Endothelial cell of umbilical vein (primary cell): ENCODE measurements at regions of chr6 and their contacts with region 1.

Region 1: DNA sequence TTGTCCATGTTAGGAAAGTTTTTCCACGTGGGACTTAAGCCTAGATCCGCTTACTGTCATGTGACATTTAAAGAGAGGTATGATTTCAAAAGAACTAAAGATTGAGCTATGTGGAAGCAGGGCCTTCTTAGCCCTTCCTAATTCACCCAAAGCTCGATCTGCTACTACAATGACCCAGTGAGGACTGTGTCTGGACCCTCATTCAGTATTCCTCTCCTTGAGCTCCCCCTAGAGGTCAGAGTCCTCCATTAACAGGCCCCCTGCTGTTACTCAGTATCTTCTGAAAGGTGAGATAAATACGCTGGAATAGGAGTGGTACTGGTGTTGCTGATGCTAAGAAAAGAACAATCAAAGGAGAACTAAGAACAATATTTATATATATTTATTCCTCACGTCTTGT is 414.0 kb downstream of the GJA1 start:
- DNase-seq: peak; percentile 88
- H3K4me3 ChIP-seq: no peak overlapping the region
- H3K27ac ChIP-seq: no peak overlapping the region
- H3K4me1 ChIP-seq: no peaks in the 10 kb centered on the region
- H3K27me3 ChIP-seq: no peaks in the 10 kb centered on the region
- CTCF ChIP-seq: peak; percentile 75 to 87
- POLR2A ChIP-seq: no peak

Region 2: DNA sequence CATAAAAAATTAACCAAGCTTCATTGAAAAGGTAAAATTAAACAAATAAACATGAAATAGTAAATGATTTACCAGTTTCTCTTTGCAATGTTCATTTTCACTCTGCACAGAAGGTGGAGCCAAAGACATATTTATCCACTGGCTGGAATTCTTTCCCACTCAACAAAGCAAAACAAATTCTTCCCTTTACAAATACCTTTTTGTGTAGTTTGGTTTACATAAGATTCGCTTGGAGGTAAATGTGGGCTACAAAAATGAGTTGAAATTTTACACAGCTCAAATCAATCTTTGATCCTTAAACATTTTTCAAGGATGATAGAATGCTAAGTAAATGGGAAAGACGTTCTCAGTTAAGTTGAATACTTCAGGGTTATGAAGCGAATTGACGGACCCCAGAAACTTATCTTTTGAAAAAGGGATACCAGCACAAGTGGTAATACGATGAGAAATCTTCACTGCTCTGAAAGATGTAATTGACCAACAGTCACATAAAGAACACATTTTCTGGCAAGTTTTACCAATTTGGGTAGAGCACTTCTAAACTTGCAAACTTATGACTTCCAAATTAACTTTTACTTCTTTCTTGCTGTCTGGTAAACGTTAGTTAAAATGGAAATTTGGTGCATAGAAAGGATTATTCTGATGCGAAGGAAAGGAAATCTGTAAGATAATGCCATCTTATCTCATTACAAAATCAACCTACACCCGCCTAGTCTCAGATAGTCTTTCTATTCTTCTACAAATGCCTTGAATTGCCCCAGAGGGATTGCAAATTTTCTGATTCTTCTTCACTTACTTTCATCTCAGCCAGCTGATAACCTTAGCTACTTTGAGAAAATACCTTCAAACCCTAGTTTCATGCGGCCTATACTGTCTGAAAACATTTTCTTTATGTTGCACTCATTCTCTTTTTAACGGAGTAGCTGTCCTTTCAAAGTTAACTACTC is 418.7 kb before region 1 on chr6:
- CTCF ChIA-PET with region 1: interaction called, 108 read pairs
- POLR2A ChIA-PET with region 1: interaction called, 4 read pairs
- dilution Hi-C with region 1: no loop called
- intact Hi-C with region 1: loop called (anchors 1 kb)
- DNase-seq: peak; percentile 77
- H3K4me3 ChIP-seq: no peak overlapping the region
- H3K27ac ChIP-seq: no peak overlapping the region
- H3K4me1 ChIP-seq: peaks cover 13% of the 10 kb centered on the region
- H3K27me3 ChIP-seq: no peaks in the 10 kb centered on the region
- CTCF ChIP-seq: peak; percentile 47 to 49
- POLR2A ChIP-seq: no peak

Region 3: GRCh38 chr6:121443971-121444541 is 405.4 kb before region 1 on chr6:
- CTCF ChIA-PET with region 1: interaction called, 85 read pairs
- POLR2A ChIA-PET with region 1: interaction called, 3 read pairs
- dilution Hi-C with region 1: no loop called
- intact Hi-C with region 1: no loop called
- DNase-seq: peak; percentile 70
- H3K4me3 ChIP-seq: no peak overlapping the region
- H3K27ac ChIP-seq: peak overlapping the region; percentile 28
- H3K4me1 ChIP-seq: peaks cover 43% of the 10 kb centered on the region
- H3K27me3 ChIP-seq: no peaks in the 10 kb centered on the region
- CTCF ChIP-seq: no peak
- POLR2A ChIP-seq: no peak

Region 4: DNA sequence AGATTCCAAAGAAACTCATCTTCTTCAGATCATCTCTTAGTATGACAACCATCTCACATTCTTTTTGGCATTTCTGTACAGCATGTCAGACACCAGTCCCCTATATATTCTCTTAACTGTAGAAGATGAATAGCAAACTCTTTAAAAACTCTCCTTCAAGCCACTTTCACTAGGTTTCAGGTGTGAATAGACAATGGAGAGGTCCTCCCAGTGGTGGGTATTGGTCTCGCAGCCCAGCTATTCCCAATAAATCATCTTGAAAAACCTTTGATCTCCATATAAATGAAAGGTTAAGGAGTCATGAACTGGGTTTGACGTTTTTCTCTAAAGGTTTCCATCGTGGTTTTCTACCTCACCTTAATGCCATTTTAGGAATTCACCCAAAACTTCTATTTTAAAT is 234.0 kb before region 1 on chr6:
- CTCF ChIA-PET with region 1: interaction called, 5 read pairs
- POLR2A ChIA-PET with region 1: no interaction called
- dilution Hi-C with region 1: no loop called
- intact Hi-C with region 1: loop called (anchors 2 kb)
- DNase-seq: peak; percentile 21
- H3K4me3 ChIP-seq: no peak overlapping the region
- H3K27ac ChIP-seq: no peak overlapping the region
- H3K4me1 ChIP-seq: no peaks in the 10 kb centered on the region
- H3K27me3 ChIP-seq: no peaks in the 10 kb centered on the region
- CTCF ChIP-seq: peak; percentile 4 to 15
- POLR2A ChIP-seq: no peak

Region 5: DNA sequence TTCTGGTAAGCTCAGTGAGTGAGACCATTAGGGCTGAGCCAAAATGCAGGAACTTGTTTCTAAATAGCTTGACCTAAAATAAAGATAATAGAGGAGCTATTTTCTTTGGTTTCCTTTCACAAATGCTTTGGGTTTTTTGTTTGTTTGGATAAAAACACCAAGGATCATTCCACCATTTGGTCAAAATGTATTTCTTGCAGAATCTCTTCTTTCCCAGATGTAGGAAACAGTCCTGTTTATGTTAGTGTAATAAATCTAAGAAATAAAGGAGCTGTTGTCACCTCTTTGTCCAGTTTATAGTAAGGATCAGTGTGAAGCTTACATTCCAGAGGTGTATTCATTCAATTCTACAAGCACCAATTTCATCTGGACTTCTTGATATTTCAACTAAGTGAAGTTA is 116.2 kb before region 1 on chr6:
- CTCF ChIA-PET with region 1: interaction called, 11 read pairs
- POLR2A ChIA-PET with region 1: no interaction called
- dilution Hi-C with region 1: no loop called
- intact Hi-C with region 1: no loop called
- DNase-seq: peak; percentile 31
- H3K4me3 ChIP-seq: no peak overlapping the region
- H3K27ac ChIP-seq: no peak overlapping the region
- H3K4me1 ChIP-seq: no peaks in the 10 kb centered on the region
- H3K27me3 ChIP-seq: no peaks in the 10 kb centered on the region
- CTCF ChIP-seq: no peak
- POLR2A ChIP-seq: no peak

Region 6: DNA sequence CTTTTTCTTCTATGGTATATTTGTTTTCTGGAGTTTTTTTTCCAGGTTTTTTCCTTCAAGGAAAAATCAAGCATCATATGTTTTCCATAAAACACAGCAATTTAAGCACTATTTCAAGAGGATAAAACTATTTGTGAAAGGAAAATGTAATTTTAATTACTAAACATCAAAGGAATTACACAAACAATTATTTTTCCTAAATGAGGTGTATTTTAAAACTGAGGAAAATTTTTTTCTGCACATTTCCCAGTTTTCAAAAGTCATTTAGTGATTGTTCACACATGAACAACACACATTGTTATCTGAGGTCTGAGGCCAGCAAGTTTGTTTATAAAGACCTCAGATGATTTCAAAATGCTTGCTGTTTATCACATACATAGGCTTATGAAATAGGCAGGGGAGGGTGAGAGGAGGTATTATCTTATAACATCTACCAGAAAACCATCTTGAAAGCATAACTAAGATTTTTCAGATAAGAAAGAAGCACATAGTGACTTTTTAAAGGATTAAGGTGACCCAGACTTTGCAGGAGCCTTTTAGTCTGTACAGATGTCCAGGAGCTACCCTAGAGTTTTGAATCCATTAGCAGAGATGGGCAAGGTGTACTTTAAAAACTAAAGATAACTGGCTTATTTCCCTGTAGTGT is 32.4 kb before region 1 on chr6:
- CTCF ChIA-PET with region 1: no interaction called
- POLR2A ChIA-PET with region 1: no interaction called
- dilution Hi-C with region 1: no loop called
- intact Hi-C with region 1: no loop called
- DNase-seq: no peak
- H3K4me3 ChIP-seq: no peak overlapping the region
- H3K27ac ChIP-seq: no peak overlapping the region
- H3K4me1 ChIP-seq: no peaks in the 10 kb centered on the region
- H3K27me3 ChIP-seq: no peaks in the 10 kb centered on the region
- CTCF ChIP-seq: no peak
- POLR2A ChIP-seq: no peak

Region 7: GRCh38 chr6:122033539-122034181 is 184.2 kb after region 1 on chr6:
- CTCF ChIA-PET with region 1: interaction called, 17 read pairs
- POLR2A ChIA-PET with region 1: no interaction called
- dilution Hi-C with region 1: no loop called
- intact Hi-C with region 1: loop called (anchors 1 kb)
- DNase-seq: peak; percentile 69
- H3K4me3 ChIP-seq: no peak overlapping the region
- H3K27ac ChIP-seq: no peak overlapping the region
- H3K4me1 ChIP-seq: no peaks in the 10 kb centered on the region
- H3K27me3 ChIP-seq: no peaks in the 10 kb centered on the region
- CTCF ChIP-seq: peak; percentile 35 to 51
- POLR2A ChIP-seq: no peak